ENCODE measurements at regions of chr2 and their contacts with region 1.

Region 1: DNA sequence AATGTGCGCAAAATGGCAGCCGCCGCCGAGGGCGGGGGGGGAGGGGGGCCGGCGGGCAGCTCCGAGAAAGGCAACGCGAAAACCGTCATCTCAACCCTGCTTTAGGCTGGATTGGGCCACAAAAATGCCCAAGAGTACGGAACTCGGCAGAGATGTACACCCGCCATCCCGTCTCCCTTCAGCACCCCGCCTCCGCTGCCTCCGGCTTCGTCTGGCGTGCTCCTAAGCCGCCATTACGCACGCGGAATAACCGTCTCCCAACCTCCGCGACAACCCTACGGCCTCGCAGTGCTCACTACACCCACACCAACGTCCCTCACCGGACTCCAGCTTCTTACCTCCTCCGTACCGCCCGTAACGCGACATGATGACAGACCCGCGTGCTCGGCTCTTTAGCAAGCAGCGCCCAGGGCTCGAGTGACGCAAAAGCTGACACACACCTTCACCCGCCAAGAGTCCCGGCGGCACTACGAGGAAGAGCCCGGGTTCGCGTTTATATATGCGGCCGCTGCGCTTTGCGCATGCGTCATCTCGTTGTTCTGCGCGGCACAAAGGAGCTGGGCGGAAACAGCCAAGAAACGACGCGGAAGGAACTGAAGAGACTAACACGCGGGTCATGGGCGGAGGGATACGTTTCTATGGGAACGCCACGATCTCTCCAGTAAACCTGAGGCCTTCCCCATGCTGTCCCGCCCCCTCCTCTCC is at the start of gene SRSF7:
- DNase-seq: peak; percentile 96 to 98 (median 98)
- H3K4me3 ChIP-seq: peak within 1 kb of the TSS; percentile 96 to 98
- H3K4me3 Mint-ChIP-seq: peak within 1 kb of the TSS; percentile 98 to 100 (median 100)
- H3K27ac ChIP-seq: peak within 1 kb of the TSS; percentile 93
- H3K27ac Mint-ChIP-seq: peak within 1 kb of the TSS; percentile 99 to 100 (median 100)
- H3K4me1 ChIP-seq: peaks cover 56% of the 10 kb centered on the region
- H3K4me1 Mint-ChIP-seq: peaks cover 42 to 70% (median 50%) of the 10 kb centered on the region in 4 donors
- H3K27me3 ChIP-seq: no peaks in the 10 kb centered on the region
- H3K27me3 Mint-ChIP-seq: peaks cover 0 to 3% of the 10 kb centered on the region in 2 donors
- total RNA-seq, gene SRSF7: 314 to 333 TPM

Region 2: GRCh38 chr2:38535744-38536506 is 215.1 kb before region 1 on chr2:
- CTCF ChIA-PET with region 1: interaction called, 96 read pairs
- POLR2A ChIA-PET with region 1: interaction called, 27 read pairs
- intact Hi-C with region 1: no loop called
- DNase-seq: peak; percentile 60 to 77 (median 70)
- H3K4me3 ChIP-seq: peak overlapping the region; percentile 47 to 52
- H3K4me3 Mint-ChIP-seq: peak overlapping the region; percentile 25 to 77 (median 52)
- H3K27ac ChIP-seq: no peak overlapping the region
- H3K27ac Mint-ChIP-seq: peak overlapping the region in 1 of 7 donors; percentile 36
- H3K4me1 ChIP-seq: peaks cover 9% of the 10 kb centered on the region
- H3K4me1 Mint-ChIP-seq: peaks cover 0 to 6% (median 2%) of the 10 kb centered on the region in 4 donors
- H3K27me3 ChIP-seq: no peaks in the 10 kb centered on the region
- H3K27me3 Mint-ChIP-seq: peaks cover 0 to 2% of the 10 kb centered on the region in 2 donors

Region 3: GRCh38 chr2:38602732-38603401 is 148.2 kb before region 1 on chr2 and contains the start of gene HNRNPLL:
- CTCF ChIA-PET with region 1: interaction called, 5 read pairs
- POLR2A ChIA-PET with region 1: interaction called, 327 read pairs
- intact Hi-C with region 1: loop called (anchors 1 kb)
- DNase-seq: peak; percentile 92 to 94 (median 92)
- H3K4me3 ChIP-seq: peak within 1 kb of the TSS; percentile 64 to 71
- H3K4me3 Mint-ChIP-seq: peak within 1 kb of the TSS; percentile 96 to 98 (median 98)
- H3K27ac ChIP-seq: peak within 1 kb of the TSS; percentile 89
- H3K27ac Mint-ChIP-seq: peak within 1 kb of the TSS; percentile 81 to 99 (median 97)
- H3K4me1 ChIP-seq: peaks cover 46% of the 10 kb centered on the region
- H3K4me1 Mint-ChIP-seq: peaks cover 28 to 51% (median 40%) of the 10 kb centered on the region in 4 donors
- H3K27me3 ChIP-seq: no peaks in the 10 kb centered on the region
- H3K27me3 Mint-ChIP-seq: peaks cover 0 to 2% of the 10 kb centered on the region in 2 donors
- total RNA-seq, gene HNRNPLL: 103 to 105 TPM

Region 4: GRCh38 chr2:38685116-38685735 is 65.8 kb before region 1 on chr2:
- CTCF ChIA-PET with region 1: interaction called, 9 read pairs
- POLR2A ChIA-PET with region 1: interaction called, 33 read pairs
- intact Hi-C with region 1: no loop called
- DNase-seq: no peak
- H3K4me3 ChIP-seq: no peak overlapping the region
- H3K4me3 Mint-ChIP-seq: peak overlapping the region in 3 of 8 donors; percentile 24 to 62 (median 53)
- H3K27ac ChIP-seq: no peak overlapping the region
- H3K27ac Mint-ChIP-seq: peak overlapping the region in 6 of 7 donors; percentile 10 to 98 (median 83)
- H3K4me1 ChIP-seq: peaks cover 61% of the 10 kb centered on the region
- H3K4me1 Mint-ChIP-seq: peaks cover 38 to 76% (median 54%) of the 10 kb centered on the region in 4 donors
- H3K27me3 ChIP-seq: no peaks in the 10 kb centered on the region
- H3K27me3 Mint-ChIP-seq: no peaks in the 10 kb centered on the region

Region 5: GRCh38 chr2:38709567-38710194 is 41.4 kb before region 1 on chr2:
- CTCF ChIA-PET with region 1: interaction called, 4 read pairs
- POLR2A ChIA-PET with region 1: interaction called, 17 read pairs
- intact Hi-C with region 1: no loop called
- DNase-seq: peak; percentile 81 to 87 (median 84)
- H3K4me3 ChIP-seq: peak overlapping the region in 1 of 2 donors; percentile 13
- H3K4me3 Mint-ChIP-seq: peak overlapping the region; percentile 33 to 90 (median 80)
- H3K27ac ChIP-seq: peak overlapping the region; percentile 46
- H3K27ac Mint-ChIP-seq: peak overlapping the region; percentile 92 to 98 (median 96)
- H3K4me1 ChIP-seq: peaks cover 84% of the 10 kb centered on the region
- H3K4me1 Mint-ChIP-seq: peaks cover 58 to 88% (median 74%) of the 10 kb centered on the region in 4 donors
- H3K27me3 ChIP-seq: no peaks in the 10 kb centered on the region
- H3K27me3 Mint-ChIP-seq: no peaks in the 10 kb centered on the region

Region 6: DNA sequence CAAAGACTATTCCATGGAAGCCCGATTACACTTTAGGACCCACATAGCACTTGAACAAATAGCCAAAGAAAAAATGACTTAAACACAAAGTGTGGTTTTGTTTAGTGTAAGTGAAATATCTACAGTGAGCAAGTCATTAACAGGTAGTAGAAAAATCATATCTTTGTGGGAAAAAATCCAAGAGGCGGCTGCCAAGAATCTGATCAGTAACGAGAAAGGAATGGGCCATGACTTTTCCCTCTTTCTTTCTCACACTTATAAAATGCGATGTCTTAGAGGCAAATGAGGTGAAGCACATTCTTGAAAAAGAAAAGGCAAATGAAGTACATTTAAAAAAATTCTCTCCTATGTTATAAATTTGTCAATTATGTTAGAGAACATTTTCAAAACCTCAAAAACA is 14.1 kb after region 1 on chr2:
- CTCF ChIA-PET with region 1: interaction called, 3 read pairs
- POLR2A ChIA-PET with region 1: interaction called, 17 read pairs
- intact Hi-C with region 1: no loop called
- DNase-seq: no peak
- H3K4me3 ChIP-seq: no peak overlapping the region
- H3K4me3 Mint-ChIP-seq: no peak overlapping the region
- H3K27ac ChIP-seq: no peak overlapping the region
- H3K27ac Mint-ChIP-seq: no peak overlapping the region
- H3K4me1 ChIP-seq: no peaks in the 10 kb centered on the region
- H3K4me1 Mint-ChIP-seq: no peaks in the 10 kb centered on the region
- H3K27me3 ChIP-seq: no peaks in the 10 kb centered on the region
- H3K27me3 Mint-ChIP-seq: no peaks in the 10 kb centered on the region

Region 7: DNA sequence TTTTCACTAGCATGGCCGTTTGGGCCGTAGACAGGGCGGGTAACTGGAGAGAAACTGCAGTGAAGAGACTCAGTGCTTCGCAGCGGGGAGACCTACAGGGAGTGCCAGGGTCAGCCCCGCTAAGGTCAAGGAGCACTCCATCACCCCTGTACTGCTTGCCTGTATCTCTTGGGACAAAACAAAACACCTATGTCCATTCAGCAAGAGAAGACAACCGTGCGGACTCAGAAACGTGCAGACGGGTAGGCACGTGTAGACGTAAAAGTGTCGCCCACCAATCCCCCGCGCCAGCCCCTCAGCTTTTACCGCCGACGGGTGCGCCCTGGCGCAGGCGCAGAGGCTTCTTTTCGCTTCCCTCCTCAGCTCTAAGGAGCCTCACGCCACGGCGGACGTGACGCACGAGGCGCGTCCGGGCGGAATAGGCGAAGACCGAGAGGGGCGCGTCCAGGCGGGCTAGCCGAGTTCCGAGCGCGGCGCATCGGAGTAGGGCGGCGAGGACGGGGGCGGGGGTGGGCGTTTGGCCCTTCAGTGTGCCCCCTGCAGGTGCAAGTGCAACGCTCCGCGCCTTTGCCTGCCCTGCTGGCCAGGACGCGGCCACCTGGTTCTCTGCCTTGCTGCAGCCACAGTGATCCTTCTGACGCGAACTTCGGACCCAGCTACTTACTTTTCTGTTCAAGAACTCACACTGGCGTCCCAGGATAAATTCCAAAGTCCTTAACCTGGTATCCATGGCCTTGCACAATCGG is 373.1 kb after region 1 on chr2:
- CTCF ChIA-PET with region 1: no interaction called
- POLR2A ChIA-PET with region 1: interaction called, 12 read pairs
- intact Hi-C with region 1: loop called (anchors 10 kb)
- DNase-seq: peak; percentile 92 to 97 (median 94)
- H3K4me3 ChIP-seq: peak overlapping the region; percentile 82 to 99
- H3K4me3 Mint-ChIP-seq: peak overlapping the region; percentile 88 to 96 (median 94)
- H3K27ac ChIP-seq: peak overlapping the region; percentile 92
- H3K27ac Mint-ChIP-seq: peak overlapping the region; percentile 91 to 96 (median 94)
- H3K4me1 ChIP-seq: peaks cover 59% of the 10 kb centered on the region
- H3K4me1 Mint-ChIP-seq: peaks cover 29 to 75% (median 53%) of the 10 kb centered on the region in 4 donors
- H3K27me3 ChIP-seq: no peaks in the 10 kb centered on the region
- H3K27me3 Mint-ChIP-seq: no peaks in the 10 kb centered on the region